ENCODE measurements at regions of chr4 and their contacts with region 1.

Region 1: DNA sequence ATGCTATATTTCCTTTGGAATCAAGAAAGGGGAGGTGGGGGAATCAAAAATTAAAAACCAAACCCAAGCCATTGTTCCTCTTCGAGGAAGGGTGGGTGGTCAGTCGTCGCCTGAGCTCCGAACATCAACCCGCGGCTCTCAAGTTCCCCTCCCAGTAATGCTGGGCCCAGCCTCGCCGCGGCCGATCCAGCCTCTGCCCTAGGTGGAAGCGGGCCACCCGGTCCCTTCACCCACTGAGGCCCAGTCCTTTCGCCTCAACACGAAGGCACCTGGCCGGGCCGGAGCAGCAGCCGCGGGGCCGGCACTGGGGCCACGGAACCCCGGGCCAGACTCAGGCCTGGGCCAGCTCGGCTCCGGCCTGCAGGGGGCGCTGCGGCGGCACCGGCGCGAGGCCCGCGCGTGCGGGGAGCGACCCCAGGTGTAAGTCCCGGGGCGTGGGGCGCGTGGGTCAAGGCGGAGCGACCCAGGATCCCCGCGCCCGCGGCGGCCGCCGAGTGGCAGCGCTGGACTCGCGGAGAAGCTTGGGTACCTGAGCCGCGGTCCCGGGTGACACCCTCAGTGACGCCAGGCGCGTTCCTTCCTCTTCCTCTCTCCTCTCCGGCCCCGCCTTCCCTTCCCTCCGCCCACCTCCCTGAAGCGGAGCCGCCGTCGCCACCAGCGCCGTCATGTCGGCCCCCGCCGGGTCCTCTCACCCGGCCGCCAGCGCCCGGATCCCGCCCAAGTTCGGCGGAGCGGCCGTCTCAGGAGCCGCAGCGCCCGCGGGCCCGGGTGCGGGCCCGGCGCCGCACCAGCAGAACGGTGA is at the start of gene SEC24B:
- DNase-seq: peak; percentile 72 to 97 (median 83)

Region 2: GRCh38 chr4:109559983-109560686 is 126.7 kb after region 1 on chr4 and contains the start of gene MCUB:
- intact Hi-C with region 1: loop called (anchors 2 kb)
- DNase-seq: peak; percentile 49 to 95 (median 68)

Region 3: DNA sequence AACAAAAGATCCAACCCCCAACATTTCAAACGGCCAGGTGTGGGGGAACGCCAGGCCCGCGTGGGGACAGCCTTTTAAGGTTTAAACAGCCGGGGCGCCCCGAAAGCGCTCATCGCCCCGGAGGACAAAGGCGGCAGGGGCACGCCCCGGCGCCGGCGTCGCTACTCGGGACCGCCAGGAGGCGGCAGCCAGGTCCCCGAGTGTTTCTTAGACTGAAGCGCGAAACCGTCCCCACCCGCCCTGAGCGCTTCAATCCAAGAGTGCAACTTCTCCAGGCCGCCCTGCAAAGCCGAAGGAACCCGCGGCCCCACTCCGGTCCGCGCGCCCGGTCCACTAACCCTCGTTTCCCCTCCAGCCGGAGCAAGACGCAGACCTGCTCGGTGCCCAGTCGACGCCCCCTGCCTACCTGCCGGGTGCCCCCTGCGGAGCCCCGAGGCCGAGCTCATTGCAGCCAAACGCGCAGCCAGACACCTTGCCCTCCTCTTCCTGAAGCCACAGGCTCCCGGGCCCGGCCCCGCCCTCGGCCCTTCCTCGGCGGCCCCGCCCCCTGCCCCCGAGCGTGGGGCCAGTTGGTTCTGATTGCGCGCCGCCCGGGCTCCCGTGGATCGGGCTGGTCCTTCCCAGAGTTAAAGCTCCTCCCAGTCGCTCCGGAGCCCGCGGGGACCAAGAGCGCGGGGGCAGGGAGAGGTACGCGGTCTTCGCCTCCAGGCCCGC is 269.7 kb after region 1 on chr4 and contains the start of gene CASP6:
- intact Hi-C with region 1: loop called (anchors 10 kb)
- DNase-seq: peak; percentile 57 to 96 (median 74)

Region 4: DNA sequence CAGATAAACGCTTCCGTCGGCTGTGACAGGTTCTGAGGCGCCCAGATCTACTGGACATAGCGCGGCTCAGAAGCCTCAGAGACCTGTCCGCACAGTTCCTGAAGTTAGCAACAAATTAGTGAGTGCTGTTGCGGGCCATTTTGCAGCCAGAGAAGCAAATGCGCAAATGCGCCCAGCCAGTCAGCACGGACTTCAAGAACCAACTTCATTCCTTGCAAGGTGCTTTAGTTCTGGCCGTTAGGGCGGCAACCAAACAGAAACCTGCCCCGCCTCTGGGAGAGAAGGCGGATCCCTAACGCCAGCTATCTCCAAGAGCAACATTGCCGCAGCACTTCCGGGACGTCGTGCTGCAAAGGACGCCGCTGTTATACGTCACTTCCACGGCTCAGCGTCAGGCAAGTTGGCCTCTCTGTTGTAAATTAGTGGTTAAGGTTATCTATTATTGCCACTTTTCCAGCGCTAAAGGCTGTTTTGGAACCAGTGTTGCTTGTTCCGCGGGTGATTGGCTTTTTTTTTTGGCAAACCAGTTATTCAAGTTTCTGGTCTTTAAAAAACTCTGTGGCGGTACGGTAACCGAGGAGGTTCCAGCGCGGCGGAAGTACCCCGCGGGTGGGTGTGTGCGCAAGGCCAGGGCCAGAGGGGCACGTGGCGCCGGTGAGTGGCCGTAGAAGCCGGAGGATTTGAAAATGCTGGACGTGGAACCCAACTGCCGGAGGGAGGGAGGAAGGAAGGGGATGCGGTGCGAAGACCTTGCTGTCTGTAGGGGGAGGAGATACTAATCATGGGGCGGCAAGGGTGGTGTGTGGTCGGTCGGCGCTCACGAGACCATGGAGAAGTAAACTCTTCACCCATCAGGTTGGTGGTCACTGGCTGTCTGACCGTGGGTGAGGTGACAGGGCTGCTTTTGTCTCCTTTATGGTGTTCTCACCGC is 382.0 kb after region 1 on chr4 and contains the start of gene GAR1:
- intact Hi-C with region 1: loop called (anchors 5 kb)
- DNase-seq: peak; percentile 81 to 98 (median 89)